Dendritic cell treated with granulocyte-macrophage colony-stimulating factor and Interleukin-4, amounts not matched to agents 40 ng/mL and 50 ng/mL, for 4 days (primary cell): ENCODE measurements at regions of chr17 and their contacts with region 1.

Region 1: DNA sequence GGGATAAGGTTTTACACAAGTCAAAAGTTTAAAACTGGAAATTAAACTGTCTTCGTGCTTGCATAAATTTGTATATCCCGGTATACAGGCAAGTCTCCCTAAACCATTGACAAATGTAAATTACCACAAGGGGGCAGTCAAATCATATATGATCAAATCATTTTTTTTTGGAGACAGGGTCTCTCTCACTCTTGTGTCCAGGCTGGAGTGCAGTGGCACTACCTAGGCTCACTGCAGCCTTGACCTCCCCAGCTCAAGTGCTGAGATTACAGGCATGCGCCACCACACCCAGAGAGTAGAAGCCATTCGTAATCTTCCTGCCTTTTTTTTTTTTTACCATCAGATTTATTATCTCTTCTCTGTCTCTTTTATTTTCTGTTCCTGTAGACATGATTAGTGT is 18.5 kb downstream of the TOP2A start:
- H3K4me3 Mint-ChIP-seq: no peak overlapping the region
- H3K27ac Mint-ChIP-seq: no peak overlapping the region
- H3K4me1 Mint-ChIP-seq: no peaks in the 10 kb centered on the region
- H3K27me3 Mint-ChIP-seq: no peaks in the 10 kb centered on the region

Region 2: GRCh38 chr17:40443583-40444327 is 44.6 kb after region 1 on chr17:
- intact Hi-C with region 1: loop called (anchors 5 kb)
- H3K4me3 Mint-ChIP-seq: peak overlapping the region; percentile 72
- H3K27ac Mint-ChIP-seq: peak overlapping the region; percentile 68
- H3K4me1 Mint-ChIP-seq: peaks cover 47% of the 10 kb centered on the region
- H3K27me3 Mint-ChIP-seq: peaks cover 47% of the 10 kb centered on the region

Region 3: GRCh38 chr17:40480501-40481003 is 81.4 kb after region 1 on chr17:
- intact Hi-C with region 1: loop called (anchors 2 kb)
- H3K4me3 Mint-ChIP-seq: peak overlapping the region; percentile 7
- H3K27ac Mint-ChIP-seq: no peak overlapping the region
- H3K4me1 Mint-ChIP-seq: peaks cover 31% of the 10 kb centered on the region
- H3K27me3 Mint-ChIP-seq: peaks cover 24% of the 10 kb centered on the region

Region 4: DNA sequence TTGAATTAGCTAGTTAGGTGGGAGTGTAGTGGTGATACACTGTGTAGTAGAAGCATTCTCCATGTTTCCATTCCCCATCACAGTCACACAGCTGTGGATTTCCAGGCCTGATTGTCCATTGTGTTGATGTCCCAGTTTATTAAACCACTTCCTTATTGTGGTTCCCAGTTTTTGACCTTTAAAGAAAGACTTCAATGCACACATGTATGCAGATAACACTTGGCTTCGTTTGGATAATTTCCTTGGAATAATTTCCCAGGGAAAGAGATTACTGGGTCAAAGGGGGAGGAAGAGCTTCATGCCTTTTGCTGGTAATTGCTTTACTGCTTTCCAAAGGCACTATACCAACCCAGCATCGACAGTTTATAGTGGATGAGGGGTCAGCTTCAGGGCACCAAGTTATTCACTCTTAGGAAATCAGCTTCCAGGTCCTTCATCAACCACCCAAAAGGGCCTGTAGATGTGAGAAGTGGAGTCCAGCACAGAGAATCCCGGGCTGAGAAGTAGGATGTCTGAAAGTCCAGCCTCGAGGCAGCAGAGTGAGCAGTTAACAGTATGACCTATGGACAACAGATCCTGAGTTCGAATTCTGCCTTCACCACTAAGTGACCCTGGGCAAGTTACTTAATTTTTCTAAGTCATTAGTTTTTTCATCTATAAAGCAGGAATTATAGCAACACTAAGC is 133.5 kb after region 1 on chr17:
- intact Hi-C with region 1: loop called (anchors 1 kb)
- H3K4me3 Mint-ChIP-seq: no peak overlapping the region
- H3K27ac Mint-ChIP-seq: no peak overlapping the region
- H3K4me1 Mint-ChIP-seq: peaks cover 22% of the 10 kb centered on the region
- H3K27me3 Mint-ChIP-seq: peaks cover 40% of the 10 kb centered on the region